ENCODE measurements at regions of chr3 and their contacts with region 1.

Region 1: DNA sequence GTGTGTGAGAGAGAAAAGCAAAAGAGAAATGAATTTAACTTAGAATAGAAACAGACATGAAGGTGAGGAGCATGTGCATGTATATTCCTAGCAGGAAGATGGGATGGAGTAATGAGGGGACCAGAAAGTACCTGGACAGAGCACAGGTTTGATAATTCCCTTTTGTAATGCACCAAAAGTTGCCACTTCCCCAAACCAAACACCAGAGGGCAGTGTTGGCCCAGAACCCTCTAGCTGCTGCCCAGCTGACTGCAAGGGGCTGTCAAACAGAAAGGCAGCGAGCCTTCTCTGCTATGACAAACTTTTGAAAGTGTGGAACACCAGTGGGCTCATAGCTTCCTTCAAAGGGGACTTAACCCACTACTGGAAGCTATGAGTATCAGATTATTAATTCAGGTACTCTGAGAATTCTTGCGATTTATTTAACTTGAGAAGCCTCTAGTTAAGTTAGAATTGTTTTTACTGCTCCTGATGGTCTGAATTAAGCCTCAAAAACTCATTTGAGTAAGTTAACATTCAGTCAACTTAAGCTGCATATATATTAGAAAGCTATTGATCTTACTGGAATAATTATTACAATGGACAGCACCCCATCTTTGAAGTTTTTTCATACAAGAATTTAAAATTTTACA is 234.9 kb downstream of the NEK10 start:
- DNase-seq: peak; percentile 9 to 56 (median 43)
- ATAC-seq: peak; percentile 83
- H3K4me3 ChIP-seq: no peak overlapping the region
- H3K4me3 Mint-ChIP-seq: no peak overlapping the region
- H3K27ac ChIP-seq: no peak overlapping the region
- H3K27ac Mint-ChIP-seq: no peak overlapping the region
- H3K4me1 ChIP-seq: no peaks in the 10 kb centered on the region
- H3K4me1 Mint-ChIP-seq: no peaks in the 10 kb centered on the region
- H3K27me3 ChIP-seq: peaks cover 0 to 3% of the 10 kb centered on the region in 2 donors
- H3K27me3 Mint-ChIP-seq: peaks cover 0 to 11% (median 0%) of the 10 kb centered on the region in 5 donors

Region 2: GRCh38 chr3:27253831-27254230 is 119.5 kb after region 1 on chr3:
- CTCF ChIA-PET with region 1: no interaction called
- POLR2A ChIA-PET with region 1: no interaction called
- intact Hi-C with region 1: loop called (anchors 1 to 10 kb)
- DNase-seq: peak in 1 of 9 donors; percentile 0
- ATAC-seq: peak; percentile 41
- H3K4me3 ChIP-seq: no peak overlapping the region
- H3K4me3 Mint-ChIP-seq: no peak overlapping the region
- H3K27ac ChIP-seq: no peak overlapping the region
- H3K27ac Mint-ChIP-seq: no peak overlapping the region
- H3K4me1 ChIP-seq: no peaks in the 10 kb centered on the region
- H3K4me1 Mint-ChIP-seq: no peaks in the 10 kb centered on the region
- H3K27me3 ChIP-seq: no peaks in the 10 kb centered on the region
- H3K27me3 Mint-ChIP-seq: peaks cover 11 to 32% (median 21%) of the 10 kb centered on the region in 5 donors